Panc1 (cell line): ENCODE measurements at regions of chr17 and their contacts with region 1.

Region 1: GRCh38 chr17:78120537-78120936 is 8.0 kb downstream of the TMC6 start:
- DNase-seq: no peak
- ATAC-seq: no peak
- H3K4me3 ChIP-seq: no peak overlapping the region
- H3K27ac ChIP-seq: no peak overlapping the region
- H3K4me1 ChIP-seq: 0 out of 2 replicates have a peak, but pooled peaks cover 5% of the 10 kb centered on the region
- H3K27me3 ChIP-seq: no peaks in the 10 kb centered on the region
- CTCF ChIP-seq: no peak

Region 2: GRCh38 chr17:77772461-77772897 is 348.1 kb before region 1 on chr17:
- CTCF ChIA-PET with region 1: no interaction called
- POLR2A ChIA-PET with region 1: no interaction called
- in situ Hi-C with region 1: no loop called
- intact Hi-C with region 1: no loop called
- DNase-seq: peak; percentile 18
- ATAC-seq: peak; percentile 96
- H3K4me3 ChIP-seq: no peak overlapping the region
- H3K27ac ChIP-seq: no peak overlapping the region
- H3K4me1 ChIP-seq: peaks cover 3% of the 10 kb centered on the region; the same call in 1 of the 2 replicates
- H3K27me3 ChIP-seq: 0 out of 2 replicates have a peak, but pooled peaks cover 3% of the 10 kb centered on the region
- CTCF ChIP-seq: peak; percentile 90

Region 3: DNA sequence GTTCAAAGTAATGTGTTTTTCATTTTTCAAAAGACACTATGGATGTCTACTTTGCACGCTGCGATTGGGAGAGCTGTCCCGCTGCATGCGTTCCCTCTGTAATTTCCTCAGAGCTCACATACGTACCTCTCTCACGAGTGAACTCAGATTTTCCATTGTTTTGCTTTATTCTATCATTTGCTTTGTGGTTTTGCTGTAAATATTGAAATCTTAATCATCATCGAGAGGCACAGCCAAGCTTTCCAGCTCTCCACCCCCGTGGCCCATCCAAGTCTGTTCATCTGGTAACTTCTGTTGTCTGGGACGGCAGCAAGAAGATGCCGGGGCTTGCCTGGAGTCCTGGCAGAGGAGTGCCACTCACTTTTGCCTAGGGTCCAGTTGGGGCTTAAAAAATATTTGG is 13.1 kb before region 1 on chr17:
- CTCF ChIA-PET with region 1: no interaction called
- POLR2A ChIA-PET with region 1: interaction called, 13 read pairs
- in situ Hi-C with region 1: no loop called
- intact Hi-C with region 1: no loop called
- DNase-seq: no peak
- ATAC-seq: no peak
- H3K4me3 ChIP-seq: no peak overlapping the region
- H3K27ac ChIP-seq: no peak overlapping the region
- H3K4me1 ChIP-seq: no peaks in the 10 kb centered on the region
- H3K27me3 ChIP-seq: no peaks in the 10 kb centered on the region
- CTCF ChIP-seq: no peak

Region 4: DNA sequence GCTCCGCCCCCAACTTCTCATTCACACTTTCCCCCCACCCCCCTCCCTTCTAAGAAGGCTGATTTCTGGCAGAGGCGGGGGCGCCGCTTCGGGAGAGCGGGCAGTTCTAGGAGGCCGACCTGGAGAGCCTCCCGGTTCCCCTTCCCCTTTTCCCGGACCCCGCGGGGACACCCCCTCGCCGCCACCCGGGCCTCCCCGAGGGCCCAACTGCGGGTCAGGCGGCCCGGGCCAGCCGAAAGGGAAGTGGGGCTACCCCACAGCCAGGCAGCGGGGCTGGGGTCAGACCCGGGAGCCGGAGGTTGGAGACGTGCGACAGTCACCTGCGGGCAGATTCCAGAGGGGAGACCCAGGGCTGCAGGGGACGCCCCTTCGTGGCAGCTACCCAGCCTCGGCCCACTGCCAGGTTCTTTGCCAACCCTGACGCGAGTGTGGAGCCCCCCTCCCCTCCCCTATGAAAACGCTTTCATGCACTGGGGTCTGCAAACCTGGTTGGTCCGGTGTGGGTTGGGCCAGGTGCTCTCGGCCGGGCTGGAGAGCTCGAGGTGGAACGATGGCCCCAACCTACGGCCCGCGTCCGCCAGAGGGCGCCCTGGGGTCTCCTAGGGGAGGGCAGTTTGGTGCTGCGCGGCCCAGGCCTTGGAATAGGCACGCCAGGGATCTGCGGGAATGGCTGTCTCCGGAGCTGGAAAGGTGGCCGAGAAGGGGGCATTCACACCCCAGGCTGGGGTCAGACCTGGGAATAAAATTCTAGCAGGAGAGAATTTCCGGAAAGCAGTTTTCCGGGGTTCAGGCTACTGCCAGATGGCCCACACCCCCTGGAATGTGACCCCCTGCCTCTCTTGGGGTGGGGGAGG is 240.1 kb after region 1 on chr17:
- CTCF ChIA-PET with region 1: no interaction called
- POLR2A ChIA-PET with region 1: no interaction called
- in situ Hi-C with region 1: no loop called
- intact Hi-C with region 1: no loop called
- DNase-seq: no peak
- ATAC-seq: peak; percentile 75
- H3K4me3 ChIP-seq: peak overlapping the region; percentile 81 to 82
- H3K27ac ChIP-seq: peak overlapping the region; percentile 70
- H3K4me1 ChIP-seq: peaks cover 44% of the 10 kb centered on the region
- H3K27me3 ChIP-seq: no peaks in the 10 kb centered on the region
- CTCF ChIP-seq: peak; percentile 98